Heart right ventricle (tissue), 16 donors: ENCODE measurements at regions of chr10 and their contacts with region 1.

Region 1: DNA sequence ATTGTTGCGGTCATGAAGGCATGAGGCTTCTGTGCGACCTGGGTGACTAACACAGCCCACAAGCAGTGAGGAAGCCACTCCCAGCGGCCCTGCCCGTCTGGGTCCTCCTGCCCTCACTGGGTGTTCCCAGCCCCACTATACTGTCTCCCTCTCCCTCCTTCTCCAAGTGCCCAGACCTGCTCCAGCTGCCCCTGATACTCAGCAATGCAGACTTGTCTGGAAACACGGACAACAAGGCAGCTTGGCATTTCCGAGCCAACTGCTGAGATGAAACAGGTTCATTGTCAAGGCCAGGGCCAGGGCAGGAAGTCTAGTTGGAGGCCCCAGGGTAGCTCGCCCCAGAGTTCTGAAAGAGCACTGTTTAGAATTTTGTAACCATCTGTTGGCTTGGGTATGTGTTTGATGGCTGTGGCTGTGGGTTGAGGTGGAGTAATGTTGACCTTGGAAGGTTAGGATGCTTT is 95.7 kb downstream of the RBM20 start:
- DNase-seq: no peak
- ATAC-seq: peak; percentile 14 to 71 (median 46)
- H3K4me3 ChIP-seq: no peak overlapping the region
- H3K27ac ChIP-seq: peak overlapping the region; percentile 5 to 80 (median 72)
- H3K4me1 ChIP-seq: peaks cover 12 to 99% (median 43%) of the 10 kb centered on the region in 9 donors
- H3K27me3 ChIP-seq: no peaks in the 10 kb centered on the region
- CTCF ChIP-seq: no peak

Region 2: GRCh38 chr10:110681023-110681681 is 58.7 kb before region 1 on chr10:
- intact Hi-C with region 1: loop called in 1 of 10 experiments (anchors 5 kb)
- DNase-seq: peak; percentile 23 to 57
- ATAC-seq: peak; percentile 52 to 69 (median 60)
- H3K4me3 ChIP-seq: no peak overlapping the region
- H3K27ac ChIP-seq: peak overlapping the region; percentile 7 to 89 (median 78)
- H3K4me1 ChIP-seq: peaks cover 0 to 76% (median 35%) of the 10 kb centered on the region in 9 donors
- H3K27me3 ChIP-seq: peaks cover 0 to 4% (median 0%) of the 10 kb centered on the region in 7 donors
- CTCF ChIP-seq: peak; percentile 31 to 68 (median 62)

Region 3: GRCh38 chr10:110698782-110699201 is 41.0 kb before region 1 on chr10:
- intact Hi-C with region 1: loop called in 1 of 10 experiments (anchors 5 kb)
- DNase-seq: peak; percentile 37 to 69
- ATAC-seq: peak; percentile 69 to 90 (median 81)
- H3K4me3 ChIP-seq: no peak overlapping the region
- H3K27ac ChIP-seq: peak overlapping the region; percentile 50 to 89 (median 81)
- H3K4me1 ChIP-seq: peaks cover 0 to 83% (median 26%) of the 10 kb centered on the region in 9 donors
- H3K27me3 ChIP-seq: no peaks in the 10 kb centered on the region
- CTCF ChIP-seq: no peak